IMR-90 (cell line): ENCODE measurements at regions of chr17 and their contacts with region 1.

Region 1: DNA sequence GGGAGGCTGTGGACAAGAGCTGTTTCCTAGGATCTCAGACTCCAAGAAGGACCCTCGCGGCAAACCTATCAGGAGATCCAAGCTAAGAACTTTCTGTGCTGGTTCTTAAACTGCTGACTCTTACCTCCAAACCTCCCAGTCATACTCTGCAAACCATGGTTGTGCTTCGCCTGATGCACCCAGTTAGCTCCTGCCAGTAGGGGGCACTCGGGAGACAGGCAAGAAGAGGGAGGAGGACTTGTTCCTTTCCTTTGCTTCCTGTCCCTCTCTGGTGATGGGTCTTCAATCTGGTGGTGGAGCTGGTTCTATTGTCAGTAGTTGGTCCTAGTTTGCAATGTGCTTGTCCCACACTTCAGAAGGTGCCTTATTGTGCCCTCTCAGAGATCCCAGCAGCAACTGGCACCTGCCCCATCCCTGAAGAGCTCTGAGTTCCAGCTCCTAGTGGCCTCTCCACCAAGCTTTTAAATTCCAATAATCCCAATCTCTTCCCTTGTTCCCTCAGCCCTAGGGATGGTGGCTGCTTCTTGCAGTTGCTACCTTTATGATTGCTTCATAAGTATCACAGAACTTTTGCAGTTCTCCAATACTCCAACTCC is 113.5 kb upstream of the RPL38 start:
- DNase-seq: no peak
- ATAC-seq: no peak
- H3K4me3 ChIP-seq: no peak overlapping the region
- H3K27ac ChIP-seq: no peak overlapping the region
- H3K4me1 ChIP-seq: no peaks in the 10 kb centered on the region
- H3K27me3 ChIP-seq: no peaks in the 10 kb centered on the region
- CTCF ChIP-seq: 0 out of 2 replicates have a peak, but pooled peaks have one; percentile 14
- POLR2A ChIP-seq: no peak
- RAD21 ChIP-seq: no peak

Region 2: GRCh38 chr17:73888862-73889261 is 201.1 kb before region 1 on chr17:
- CTCF ChIA-PET with region 1: no interaction called
- POLR2A ChIA-PET with region 1: no interaction called
- dilution Hi-C with region 1: no loop called
- in situ Hi-C with region 1: loop called (anchors 25 kb)
- intact Hi-C with region 1: no loop called
- DNase-seq: no peak
- ATAC-seq: no peak
- H3K4me3 ChIP-seq: no peak overlapping the region
- H3K27ac ChIP-seq: no peak overlapping the region
- H3K4me1 ChIP-seq: no peaks in the 10 kb centered on the region
- H3K27me3 ChIP-seq: no peaks in the 10 kb centered on the region
- CTCF ChIP-seq: no peak
- POLR2A ChIP-seq: no peak
- RAD21 ChIP-seq: no peak

Region 3: GRCh38 chr17:74024871-74025531 is 65.0 kb before region 1 on chr17:
- CTCF ChIA-PET with region 1: no interaction called
- POLR2A ChIA-PET with region 1: no interaction called
- dilution Hi-C with region 1: no loop called
- in situ Hi-C with region 1: loop called (anchors 10 kb)
- intact Hi-C with region 1: no loop called
- DNase-seq: no peak
- ATAC-seq: no peak
- H3K4me3 ChIP-seq: no peak overlapping the region
- H3K27ac ChIP-seq: no peak overlapping the region
- H3K4me1 ChIP-seq: no peaks in the 10 kb centered on the region
- H3K27me3 ChIP-seq: no peaks in the 10 kb centered on the region
- CTCF ChIP-seq: no peak
- POLR2A ChIP-seq: no peak
- RAD21 ChIP-seq: no peak

Region 4: DNA sequence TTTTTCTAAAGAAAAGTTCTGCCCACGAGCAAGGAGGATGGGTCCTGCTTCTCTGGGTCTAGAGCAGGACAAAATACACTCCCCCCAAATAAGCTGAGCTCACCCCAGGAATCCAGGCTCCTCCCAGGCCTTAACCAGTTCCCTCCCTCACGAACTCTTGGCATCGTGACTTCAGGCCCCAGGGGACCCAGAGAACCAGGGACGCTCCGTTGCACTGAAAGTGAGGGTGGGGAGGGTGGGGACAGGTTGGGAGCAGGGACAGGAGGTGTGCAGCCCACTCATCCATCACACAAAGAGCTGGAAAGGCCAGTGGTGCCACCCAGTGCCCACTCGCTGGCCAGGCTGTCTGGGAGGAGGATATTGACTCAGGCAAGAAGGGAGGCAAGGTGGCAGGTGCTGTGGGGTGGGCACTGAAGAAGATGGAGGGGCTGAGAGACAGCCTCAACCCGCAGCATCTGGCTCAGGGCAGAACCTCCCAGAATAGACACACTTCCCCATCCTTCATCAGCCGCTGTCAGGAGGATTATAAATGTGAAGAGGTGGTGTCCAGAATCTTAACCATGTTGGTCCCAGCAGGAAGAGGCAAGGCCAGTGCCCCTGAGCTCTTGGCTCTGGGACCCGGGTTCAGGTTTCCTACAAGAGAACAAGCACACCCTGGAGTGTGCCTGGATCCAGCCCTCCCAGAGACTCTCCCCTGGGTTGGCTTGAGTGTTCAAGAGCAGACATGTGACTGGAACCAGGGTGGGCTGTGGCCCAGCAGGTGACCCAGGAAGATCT is 45.6 kb after region 1 on chr17:
- CTCF ChIA-PET with region 1: no interaction called
- POLR2A ChIA-PET with region 1: no interaction called
- dilution Hi-C with region 1: no loop called
- in situ Hi-C with region 1: no loop called
- intact Hi-C with region 1: no loop called
- DNase-seq: no peak
- ATAC-seq: no peak
- H3K4me3 ChIP-seq: no peak overlapping the region
- H3K27ac ChIP-seq: no peak overlapping the region
- H3K4me1 ChIP-seq: no peaks in the 10 kb centered on the region
- H3K27me3 ChIP-seq: no peaks in the 10 kb centered on the region
- CTCF ChIP-seq: no peak
- POLR2A ChIP-seq: no peak
- RAD21 ChIP-seq: no peak